Heart left ventricle (tissue), 16 donors: ENCODE measurements at regions of chr15 and their contacts with region 1.

Region 1: DNA sequence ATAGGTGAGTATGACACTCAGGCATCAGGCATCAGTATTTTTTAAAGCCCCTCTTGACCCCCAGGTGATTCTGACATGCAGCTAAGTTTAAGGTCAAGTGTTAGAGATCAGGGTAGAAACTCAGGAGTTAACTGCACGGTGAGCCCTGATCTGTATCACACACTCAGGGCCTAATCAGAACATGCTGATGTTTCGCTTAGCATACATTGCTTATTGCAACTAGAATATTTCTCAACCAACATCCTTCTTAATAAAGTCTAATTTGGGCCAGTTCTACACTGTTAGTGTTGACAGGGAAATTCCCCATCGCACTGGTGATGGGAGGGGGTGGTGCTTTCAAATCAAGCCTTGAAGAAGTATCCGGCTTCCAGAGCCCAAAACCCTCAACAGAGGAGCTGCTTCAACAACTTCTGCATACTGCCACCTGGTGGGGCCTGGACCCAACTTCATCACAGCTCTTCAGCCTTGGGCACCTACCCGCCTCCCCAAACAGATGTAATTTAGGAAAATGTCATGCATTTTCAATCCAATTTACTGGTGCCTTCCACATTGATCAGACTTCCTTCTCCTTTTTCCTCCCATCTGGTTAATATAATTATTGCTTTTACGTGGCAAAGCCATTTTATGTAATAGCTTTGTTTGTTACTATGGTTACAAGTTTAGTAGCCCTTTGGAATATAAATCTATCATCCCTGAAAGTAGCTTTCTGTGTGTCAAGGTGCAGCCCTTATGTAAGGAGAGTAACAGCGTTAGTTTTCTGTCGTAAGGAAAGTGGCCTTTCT is 312.2 kb downstream of the RORA start:
- DNase-seq: peak; percentile 84 to 91 (median 86)
- ATAC-seq: peak; percentile 83 to 91 (median 86)
- H3K4me3 ChIP-seq: peak overlapping the region in 6 of 12 donors; percentile 1 to 30 (median 10)
- H3K27ac ChIP-seq: peak overlapping the region; percentile 10 to 82 (median 53)
- H3K4me1 ChIP-seq: peaks cover 0 to 39% (median 20%) of the 10 kb centered on the region in 12 donors
- H3K27me3 ChIP-seq: no peaks in the 10 kb centered on the region
- CTCF ChIP-seq: peak; percentile 73 to 91 (median 86)
- POLR2A ChIP-seq: no peak

Region 2: GRCh38 chr15:60362321-60363086 is 554.4 kb before region 1 on chr15:
- intact Hi-C with region 1: loop called in 1 of 10 experiments (anchors 10 kb)
- DNase-seq: peak in 1 of 5 donors; percentile 42
- ATAC-seq: peak in 3 of 4 donors; percentile 71 to 72 (median 71)
- H3K4me3 ChIP-seq: no peak overlapping the region
- H3K27ac ChIP-seq: peak overlapping the region in 10 of 12 donors; percentile 33 to 80 (median 50)
- H3K4me1 ChIP-seq: peaks cover 6 to 63% (median 32%) of the 10 kb centered on the region in 12 donors
- H3K27me3 ChIP-seq: no peaks in the 10 kb centered on the region
- CTCF ChIP-seq: no peak
- POLR2A ChIP-seq: no peak

Region 3: DNA sequence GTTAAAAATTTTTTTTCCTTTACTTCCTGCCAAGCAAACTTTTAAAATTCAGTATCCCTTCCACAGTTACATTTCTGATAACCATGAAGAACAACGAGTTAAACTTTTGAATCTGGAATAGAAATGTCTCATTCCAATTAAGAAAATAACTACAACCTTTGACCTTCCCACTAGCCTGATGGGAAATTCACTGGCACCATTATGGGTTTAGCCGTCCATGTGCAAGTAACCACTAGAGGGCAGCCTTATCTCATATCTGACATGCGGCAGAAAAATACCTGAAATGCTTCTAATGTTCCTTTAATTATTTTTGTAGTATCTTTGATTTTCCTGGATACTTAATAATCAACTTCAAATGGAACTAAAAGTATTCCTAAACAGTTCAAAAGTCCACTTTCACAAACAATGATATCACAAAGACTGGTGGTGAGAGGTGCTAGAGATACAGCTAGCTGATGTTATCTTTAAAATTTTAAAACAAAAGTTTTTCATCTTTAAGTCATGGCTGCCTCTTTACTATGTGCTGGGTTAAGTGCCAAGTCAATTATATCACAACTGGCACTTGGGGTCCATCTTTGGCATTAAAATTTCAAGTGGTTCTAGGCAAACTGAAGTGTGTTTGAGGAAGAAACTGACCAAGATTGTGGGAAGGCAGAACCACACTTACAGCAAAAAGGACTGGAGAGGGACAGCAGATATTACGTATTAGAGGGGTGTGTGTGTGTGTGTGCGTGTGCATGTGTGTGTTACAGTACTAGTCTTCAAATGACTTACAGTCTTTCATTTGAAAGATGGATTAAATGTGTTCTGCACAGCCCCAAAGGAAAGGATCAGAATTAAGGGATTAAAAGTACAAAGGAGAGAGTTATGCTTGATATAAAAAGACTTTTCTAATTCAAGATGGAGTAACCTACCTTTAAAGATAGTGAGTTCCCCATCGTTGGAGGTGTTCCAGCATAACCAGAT is 330.8 kb before region 1 on chr15:
- intact Hi-C with region 1: loop called in 9 of 10 experiments (anchors 1 to 5 kb)
- DNase-seq: peak in 4 of 5 donors; percentile 33 to 60 (median 40)
- ATAC-seq: peak; percentile 60 to 81 (median 79)
- H3K4me3 ChIP-seq: no peak overlapping the region
- H3K27ac ChIP-seq: peak overlapping the region in 2 of 12 donors; percentile 7 to 73
- H3K4me1 ChIP-seq: peaks cover 0 to 66% (median 23%) of the 10 kb centered on the region in 12 donors
- H3K27me3 ChIP-seq: no peaks in the 10 kb centered on the region
- CTCF ChIP-seq: peak; percentile 82 to 97 (median 91)
- POLR2A ChIP-seq: no peak

Region 4: DNA sequence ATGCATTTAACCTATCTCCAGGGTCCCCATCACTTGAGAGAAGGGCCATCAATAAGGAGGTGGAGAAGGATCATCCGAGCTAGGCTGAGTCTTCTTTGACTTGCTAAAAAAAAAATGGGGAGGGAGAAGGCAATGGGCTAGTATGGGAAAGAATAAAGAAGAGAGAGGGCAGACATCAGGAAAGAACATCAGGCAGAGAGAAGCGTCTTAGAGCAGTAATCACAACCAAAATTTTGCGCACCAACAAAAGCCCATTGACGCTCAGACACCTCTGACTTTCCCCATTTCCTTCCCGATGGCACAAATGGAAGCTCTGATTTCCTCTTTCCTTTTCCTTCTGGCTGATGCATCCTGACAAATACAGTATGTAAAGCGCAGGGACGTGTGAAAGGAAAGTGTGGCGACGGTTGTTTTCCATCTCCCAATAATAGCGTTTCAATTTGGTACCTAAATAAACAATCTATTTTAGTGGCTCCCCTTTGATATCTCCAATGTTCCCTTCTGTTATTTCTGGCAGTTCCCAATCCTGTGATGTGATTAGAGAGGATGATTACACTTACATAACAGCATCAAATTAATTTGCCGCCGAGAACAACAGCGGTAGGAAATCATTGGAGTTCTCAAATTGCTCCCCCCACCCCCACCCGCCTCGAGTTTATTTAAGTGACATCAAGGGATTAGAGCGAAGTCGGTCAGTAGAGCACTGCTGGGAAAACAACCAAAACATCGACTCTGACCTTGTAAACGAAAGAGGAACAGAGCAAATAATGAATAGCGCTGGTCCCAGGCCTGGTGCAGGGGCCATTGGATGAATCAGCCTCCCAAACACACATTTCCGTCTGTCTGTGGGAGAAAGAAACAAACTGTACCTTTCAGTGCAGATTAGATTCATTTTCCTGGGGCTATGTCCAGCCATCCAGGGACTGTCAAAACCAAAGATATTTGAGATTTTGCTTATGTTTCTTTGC is 164.6 kb before region 1 on chr15:
- intact Hi-C with region 1: loop called in 2 of 10 experiments (anchors 5 to 10 kb)
- DNase-seq: peak in 4 of 5 donors; percentile 45 to 67 (median 52)
- ATAC-seq: peak; percentile 92 to 95 (median 92)
- H3K4me3 ChIP-seq: peak overlapping the region in 9 of 12 donors; percentile 3 to 44 (median 25)
- H3K27ac ChIP-seq: peak overlapping the region; percentile 6 to 81 (median 60)
- H3K4me1 ChIP-seq: peaks cover 0 to 22% (median 12%) of the 10 kb centered on the region in 12 donors
- H3K27me3 ChIP-seq: no peaks in the 10 kb centered on the region
- CTCF ChIP-seq: no peak
- POLR2A ChIP-seq: no peak

Region 5: GRCh38 chr15:61834076-61834697 is 917.3 kb after region 1 on chr15:
- intact Hi-C with region 1: loop called in 1 of 10 experiments (anchors 10 kb)
- DNase-seq: peak; percentile 72 to 88 (median 79)
- ATAC-seq: peak in 3 of 4 donors; percentile 75 to 84 (median 80)
- H3K4me3 ChIP-seq: no peak overlapping the region
- H3K27ac ChIP-seq: no peak overlapping the region
- H3K4me1 ChIP-seq: peaks cover 0 to 9% (median 3%) of the 10 kb centered on the region in 12 donors
- H3K27me3 ChIP-seq: no peaks in the 10 kb centered on the region
- CTCF ChIP-seq: peak in 11 of 12 donors; percentile 91 to 98 (median 96)
- POLR2A ChIP-seq: no peak